PC-3 (cell line): ENCODE measurements at regions of chr2 and their contacts with region 1.

Region 1: DNA sequence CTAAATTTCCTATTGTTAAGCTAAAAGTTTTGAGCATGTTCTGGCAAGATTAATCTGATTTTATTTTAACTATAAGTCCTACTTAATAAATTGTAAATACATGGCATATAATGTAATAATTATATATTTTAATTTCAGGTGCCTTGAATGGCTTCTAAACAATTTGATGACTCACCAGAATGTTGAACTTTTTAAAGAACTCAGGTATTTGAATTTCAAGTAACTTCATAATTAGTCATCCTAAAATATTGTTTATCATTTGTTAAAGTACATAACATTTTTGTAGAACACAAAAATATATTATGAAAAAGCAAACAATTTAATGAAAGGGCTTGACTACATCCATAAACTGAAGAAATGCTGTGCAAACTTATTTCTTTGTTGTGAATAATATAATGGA is 14.5 kb downstream of the GMCL1 start:
- DNase-seq: peak; percentile 68
- ATAC-seq: peak; percentile 83
- H3K4me3 ChIP-seq: no peak overlapping the region
- H3K27ac ChIP-seq: peak overlapping the region; percentile 51
- H3K4me1 ChIP-seq: peaks cover 33% of the 10 kb centered on the region
- H3K27me3 ChIP-seq: no peaks in the 10 kb centered on the region
- CTCF ChIP-seq: no peak

Region 2: GRCh38 chr2:69863298-69863697 is 19.3 kb after region 1 on chr2:
- CTCF ChIA-PET with region 1: no interaction called
- POLR2A ChIA-PET with region 1: no interaction called
- intact Hi-C with region 1: loop called (anchors 2 kb)
- DNase-seq: no peak
- ATAC-seq: peak; percentile 25; the same call in 1 of the 2 replicates
- H3K4me3 ChIP-seq: no peak overlapping the region
- H3K27ac ChIP-seq: no peak overlapping the region
- H3K4me1 ChIP-seq: peaks cover 16% of the 10 kb centered on the region
- H3K27me3 ChIP-seq: no peaks in the 10 kb centered on the region
- CTCF ChIP-seq: no peak

Region 3: GRCh38 chr2:69893684-69894551 is 49.9 kb after region 1 on chr2 and contains the start of gene SNRNP27:
- CTCF ChIA-PET with region 1: no interaction called
- POLR2A ChIA-PET with region 1: no interaction called
- intact Hi-C with region 1: loop called (anchors 5 kb)
- DNase-seq: peak; percentile 86
- ATAC-seq: peak; percentile 79
- H3K4me3 ChIP-seq: peak within 1 kb of the TSS; percentile 82
- H3K27ac ChIP-seq: peak within 1 kb of the TSS; percentile 58
- H3K4me1 ChIP-seq: peaks cover 10% of the 10 kb centered on the region
- H3K27me3 ChIP-seq: no peaks in the 10 kb centered on the region
- CTCF ChIP-seq: no peak
- total RNA-seq, gene SNRNP27: 44.1 and 56.3 TPM in 2 replicates